Natural killer cell (primary cell): ENCODE measurements at regions of chrX and their contacts with region 1.

Region 1: DNA sequence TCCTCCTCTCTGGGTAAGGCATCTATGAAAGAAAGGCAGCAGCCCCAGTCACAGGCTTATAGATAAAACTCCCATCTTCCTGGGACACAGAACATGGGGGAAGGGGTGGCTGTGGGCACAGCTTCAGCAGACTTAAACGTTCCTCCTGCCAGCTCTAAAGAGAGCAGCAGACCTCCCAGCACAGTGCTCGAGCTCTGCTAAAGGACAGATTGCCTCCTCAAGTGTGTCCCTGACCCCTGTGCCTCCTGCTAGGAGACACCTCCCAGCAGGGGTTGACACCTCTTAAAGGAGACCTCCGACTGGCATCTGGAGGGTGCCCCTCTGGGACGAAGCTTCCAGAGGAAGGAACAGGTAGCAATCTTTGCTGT is 89.9 kb downstream of the EFHC2 start:
- DNase-seq: no peak
- ATAC-seq: peak in 1 of 3 donors; percentile 55
- H3K4me3 ChIP-seq: peak overlapping the region; percentile 13
- H3K4me3 Mint-ChIP-seq: peak overlapping the region; percentile 70
- H3K27ac ChIP-seq: peak overlapping the region; percentile 97
- H3K27ac Mint-ChIP-seq: peak overlapping the region; percentile 79 to 91
- H3K4me1 ChIP-seq: peaks cover 16% of the 10 kb centered on the region
- H3K4me1 Mint-ChIP-seq: peaks cover 35 to 38% of the 10 kb centered on the region in 2 donors
- H3K27me3 ChIP-seq: no peaks in the 10 kb centered on the region
- H3K27me3 Mint-ChIP-seq: no peaks in the 10 kb centered on the region
- CTCF ChIP-seq: no peak

Region 2: DNA sequence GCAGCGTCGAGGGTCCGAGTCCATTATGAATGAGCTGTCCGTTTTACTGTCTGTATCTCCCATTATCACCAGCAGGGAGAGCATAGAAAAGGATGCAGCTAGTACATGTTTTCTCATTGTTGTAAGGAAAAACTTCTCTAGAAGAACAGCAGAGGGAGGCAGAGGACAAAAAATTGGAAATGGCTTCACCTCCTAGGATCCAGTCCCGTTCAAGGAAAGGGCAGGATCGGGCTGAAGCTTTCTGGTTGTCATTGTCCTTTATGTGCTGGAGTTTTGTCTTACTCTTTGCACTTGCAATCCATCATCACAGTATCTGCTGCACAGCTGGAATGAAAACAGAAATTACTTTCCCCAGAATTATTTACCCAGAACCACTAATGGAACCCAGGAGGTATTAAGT is 295.0 kb before region 1 on chrX:
- intact Hi-C with region 1: no loop called
- DNase-seq: peak in 1 of 2 donors; percentile 74
- ATAC-seq: peak; percentile 64 to 90 (median 88)
- H3K4me3 ChIP-seq: no peak overlapping the region
- H3K4me3 Mint-ChIP-seq: no peak overlapping the region
- H3K27ac ChIP-seq: no peak overlapping the region
- H3K27ac Mint-ChIP-seq: no peak overlapping the region
- H3K4me1 ChIP-seq: no peaks in the 10 kb centered on the region
- H3K4me1 Mint-ChIP-seq: peaks cover 5 to 7% of the 10 kb centered on the region in 2 donors
- H3K27me3 ChIP-seq: no peaks in the 10 kb centered on the region
- H3K27me3 Mint-ChIP-seq: peaks cover 3 to 40% of the 10 kb centered on the region in 2 donors
- CTCF ChIP-seq: peak; percentile 75

Region 3: DNA sequence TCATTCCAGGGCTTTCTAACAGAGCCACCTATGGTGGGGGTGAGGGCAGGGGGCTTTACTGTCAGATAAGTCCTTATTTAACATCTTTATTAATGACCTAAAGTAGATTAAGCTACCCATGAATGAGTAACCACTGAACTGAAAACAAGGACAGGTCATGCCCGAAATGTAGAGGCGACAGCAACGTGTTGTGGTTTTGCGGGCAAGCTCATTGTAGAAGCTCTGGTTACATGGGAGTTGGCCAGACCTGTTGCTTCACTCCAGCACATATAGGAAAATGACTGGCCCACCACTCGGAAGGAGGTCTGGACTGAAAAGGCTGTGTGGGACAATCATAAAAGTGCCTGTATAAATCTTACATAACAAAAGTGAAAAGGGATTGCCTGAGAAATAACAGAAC is 170.7 kb before region 1 on chrX:
- intact Hi-C with region 1: no loop called
- DNase-seq: no peak
- ATAC-seq: no peak
- H3K4me3 ChIP-seq: no peak overlapping the region
- H3K4me3 Mint-ChIP-seq: no peak overlapping the region
- H3K27ac ChIP-seq: no peak overlapping the region
- H3K27ac Mint-ChIP-seq: no peak overlapping the region
- H3K4me1 ChIP-seq: no peaks in the 10 kb centered on the region
- H3K4me1 Mint-ChIP-seq: no peaks in the 10 kb centered on the region
- H3K27me3 ChIP-seq: no peaks in the 10 kb centered on the region
- H3K27me3 Mint-ChIP-seq: peaks cover 2 to 23% of the 10 kb centered on the region in 2 donors
- CTCF ChIP-seq: no peak

Region 4: GRCh38 chrX:44267116-44267515 is 13.6 kb after region 1 on chrX:
- intact Hi-C with region 1: loop called (anchors 2 kb)
- DNase-seq: no peak
- ATAC-seq: peak; percentile 63 to 69 (median 68)
- H3K4me3 ChIP-seq: no peak overlapping the region
- H3K4me3 Mint-ChIP-seq: no peak overlapping the region
- H3K27ac ChIP-seq: peak overlapping the region; percentile 65
- H3K27ac Mint-ChIP-seq: peak overlapping the region; percentile 61 to 74
- H3K4me1 ChIP-seq: peaks cover 15% of the 10 kb centered on the region
- H3K4me1 Mint-ChIP-seq: peaks cover 16 to 37% of the 10 kb centered on the region in 2 donors
- H3K27me3 ChIP-seq: no peaks in the 10 kb centered on the region
- H3K27me3 Mint-ChIP-seq: peaks cover 0 to 9% of the 10 kb centered on the region in 2 donors
- CTCF ChIP-seq: no peak

Region 5: DNA sequence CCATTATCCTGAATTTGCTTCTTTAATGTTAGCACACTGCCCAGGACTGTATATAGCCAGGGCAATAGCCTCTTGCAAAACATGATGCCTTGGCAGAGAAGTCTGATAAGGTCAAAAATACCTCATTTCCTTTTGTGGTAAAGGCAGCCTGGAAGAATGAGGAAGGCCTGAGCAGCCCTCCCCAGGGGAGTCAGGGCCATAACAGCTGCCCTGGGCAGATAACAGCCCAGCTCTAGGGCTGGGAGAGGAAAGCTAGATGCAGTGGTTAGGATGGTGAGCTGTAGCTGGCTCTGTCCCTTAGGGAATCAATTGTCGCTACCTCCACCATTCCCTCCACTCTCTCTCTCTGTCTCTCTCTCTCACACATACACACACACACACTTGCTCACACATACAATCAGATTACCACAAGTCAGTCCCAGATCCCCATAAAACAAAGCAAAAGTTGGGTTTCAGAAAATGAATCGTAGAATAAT is 60.7 kb after region 1 on chrX:
- intact Hi-C with region 1: no loop called
- DNase-seq: peak in 1 of 2 donors; percentile 12
- ATAC-seq: peak; percentile 64 to 89 (median 66)
- H3K4me3 ChIP-seq: no peak overlapping the region
- H3K4me3 Mint-ChIP-seq: peak overlapping the region; percentile 37
- H3K27ac ChIP-seq: peak overlapping the region; percentile 69
- H3K27ac Mint-ChIP-seq: peak overlapping the region; percentile 66 to 84
- H3K4me1 ChIP-seq: peaks cover 23% of the 10 kb centered on the region
- H3K4me1 Mint-ChIP-seq: peaks cover 25 to 26% of the 10 kb centered on the region in 2 donors
- H3K27me3 ChIP-seq: no peaks in the 10 kb centered on the region
- H3K27me3 Mint-ChIP-seq: peaks cover 0 to 6% of the 10 kb centered on the region in 2 donors
- CTCF ChIP-seq: no peak

Region 6: DNA sequence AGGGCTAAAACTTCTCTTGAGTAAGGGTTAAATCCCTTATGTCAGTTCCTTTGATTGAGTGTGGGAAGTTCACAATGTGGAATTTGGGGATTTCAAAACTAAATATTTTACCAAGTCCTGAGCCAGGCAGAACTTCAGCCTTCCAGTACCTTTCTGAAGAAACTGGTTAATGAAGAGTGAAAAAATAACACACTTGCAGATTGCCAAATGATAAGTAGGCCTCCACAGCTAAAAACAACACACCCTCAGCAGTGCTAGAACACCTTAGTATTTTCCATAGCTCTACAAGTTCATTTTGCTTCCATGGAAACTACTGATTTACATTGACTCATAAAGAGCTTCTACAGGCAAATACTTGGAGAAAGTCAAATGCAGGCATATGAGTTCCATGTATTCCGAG is 1964.8 kb after region 1 on chrX:
- intact Hi-C with region 1: no loop called
- DNase-seq: no peak
- ATAC-seq: no peak
- H3K4me3 ChIP-seq: no peak overlapping the region
- H3K4me3 Mint-ChIP-seq: no peak overlapping the region
- H3K27ac ChIP-seq: no peak overlapping the region
- H3K27ac Mint-ChIP-seq: no peak overlapping the region
- H3K4me1 ChIP-seq: no peaks in the 10 kb centered on the region
- H3K4me1 Mint-ChIP-seq: no peaks in the 10 kb centered on the region
- H3K27me3 ChIP-seq: no peaks in the 10 kb centered on the region
- H3K27me3 Mint-ChIP-seq: peaks cover 3 to 40% of the 10 kb centered on the region in 2 donors
- CTCF ChIP-seq: no peak